GM18951 (cell line): ENCODE measurements at regions of chr19 and their contacts with region 1.

Region 1: GRCh38 chr19:29704562-29705558 is 10.2 kb downstream of the C19orf12 start:
- POLR2A ChIP-seq: no peak

Region 2: GRCh38 chr19:29610563-29611271 is 94.1 kb before region 1 on chr19:
- in situ Hi-C with region 1: loop called (anchors 10 kb)
- POLR2A ChIP-seq: no peak

Region 3: GRCh38 chr19:29908963-29909944 is 204.4 kb after region 1 on chr19:
- in situ Hi-C with region 1: no loop called
- POLR2A ChIP-seq: no peak

Region 4: GRCh38 chr19:30123174-30123573 is 418.3 kb after region 1 on chr19:
- in situ Hi-C with region 1: no loop called
- POLR2A ChIP-seq: no peak